ENCODE measurements at regions of chr15 and their contacts with region 1.

Region 1: GRCh38 chr15:62896978-62897647 is 145.4 kb upstream of the TPM1 start:
- DNase-seq: peak; percentile 95 to 96
- H3K4me3 ChIP-seq: peak overlapping the region in 2 of 3 donors; percentile 19 to 23
- H3K27ac ChIP-seq: peak overlapping the region; percentile 97 to 98
- H3K4me1 ChIP-seq: peaks cover 4 to 22% of the 10 kb centered on the region in 2 donors
- H3K27me3 ChIP-seq: no peaks in the 10 kb centered on the region
- CTCF ChIP-seq: no peak
- POLR2A ChIP-seq: no peak

Region 2: GRCh38 chr15:62658498-62658897 is 238.6 kb before region 1 on chr15:
- intact Hi-C with region 1: no loop called
- DNase-seq: no peak
- H3K4me3 ChIP-seq: no peak overlapping the region
- H3K27ac ChIP-seq: no peak overlapping the region
- H3K4me1 ChIP-seq: no peaks in the 10 kb centered on the region
- H3K27me3 ChIP-seq: no peaks in the 10 kb centered on the region
- CTCF ChIP-seq: no peak
- POLR2A ChIP-seq: no peak

Region 3: DNA sequence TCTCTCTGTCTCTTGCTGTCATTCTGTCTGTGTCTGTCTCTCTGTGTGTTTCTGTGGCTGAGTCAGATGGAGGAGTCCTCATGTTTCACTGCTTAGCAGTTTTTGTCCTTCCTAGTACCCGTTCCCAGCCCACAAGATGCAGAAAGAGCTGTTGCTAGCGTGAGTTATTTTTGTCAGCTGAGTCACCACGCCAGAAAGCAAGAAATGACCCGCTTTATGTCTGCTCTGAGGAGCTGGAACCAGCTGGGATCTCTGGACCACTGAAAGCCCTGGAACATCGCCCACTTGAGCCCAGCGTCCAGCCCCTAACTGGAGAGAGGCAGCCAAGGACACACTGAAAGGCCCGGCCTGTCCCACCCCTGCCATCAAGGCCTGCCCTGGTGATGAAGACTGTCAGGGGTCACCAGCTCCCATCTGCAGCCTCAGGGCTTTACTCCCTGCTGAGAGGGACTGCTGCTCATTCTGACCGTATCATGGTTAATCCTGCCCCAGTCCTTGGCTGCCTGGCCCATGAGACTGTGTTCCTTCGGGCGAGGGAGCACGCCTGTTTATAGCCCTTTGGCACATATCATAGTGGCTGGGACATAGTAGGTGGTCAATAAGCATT is 43.7 kb after region 1 on chr15:
- intact Hi-C with region 1: loop called (anchors 5 kb)
- DNase-seq: peak in 1 of 2 donors; percentile 32
- H3K4me3 ChIP-seq: no peak overlapping the region
- H3K27ac ChIP-seq: peak overlapping the region; percentile 59 to 85
- H3K4me1 ChIP-seq: no peaks in the 10 kb centered on the region
- H3K27me3 ChIP-seq: no peaks in the 10 kb centered on the region
- CTCF ChIP-seq: no peak
- POLR2A ChIP-seq: no peak